ENCODE measurements at regions of chr5 and their contacts with region 1.

Region 1: DNA sequence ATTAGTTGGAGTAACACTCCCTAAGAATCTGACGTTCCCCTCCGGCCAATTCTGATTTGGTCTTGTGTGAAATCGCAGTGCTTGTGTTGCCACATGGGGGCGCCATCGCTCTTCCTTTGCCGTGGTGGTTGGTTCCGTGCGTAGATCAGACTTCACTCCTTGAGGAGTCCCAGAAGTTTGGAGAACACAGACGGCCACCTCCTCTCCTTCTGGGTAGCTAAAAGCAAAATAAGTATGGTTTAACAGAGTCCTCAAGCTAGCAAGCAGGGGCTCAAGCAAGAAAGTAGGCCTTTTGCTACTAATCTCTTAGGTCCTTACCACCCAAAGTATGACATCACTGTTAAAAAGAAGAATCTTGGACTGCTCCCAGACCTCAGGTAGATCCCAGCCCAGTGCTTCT is 59.5 kb downstream of the HSPA4 start:
- DNase-seq: peak; percentile 68 to 90
- H3K4me3 ChIP-seq: no peak overlapping the region
- H3K4me1 ChIP-seq: no peaks in the 10 kb centered on the region
- H3K27me3 ChIP-seq: no peaks in the 10 kb centered on the region

Region 2: GRCh38 chr5:133232011-133232410 is 120.7 kb after region 1 on chr5:
- in situ Hi-C with region 1: no loop called
- DNase-seq: no peak
- H3K4me3 ChIP-seq: no peak overlapping the region
- H3K4me1 ChIP-seq: no peaks in the 10 kb centered on the region
- H3K27me3 ChIP-seq: no peaks in the 10 kb centered on the region

Region 3: DNA sequence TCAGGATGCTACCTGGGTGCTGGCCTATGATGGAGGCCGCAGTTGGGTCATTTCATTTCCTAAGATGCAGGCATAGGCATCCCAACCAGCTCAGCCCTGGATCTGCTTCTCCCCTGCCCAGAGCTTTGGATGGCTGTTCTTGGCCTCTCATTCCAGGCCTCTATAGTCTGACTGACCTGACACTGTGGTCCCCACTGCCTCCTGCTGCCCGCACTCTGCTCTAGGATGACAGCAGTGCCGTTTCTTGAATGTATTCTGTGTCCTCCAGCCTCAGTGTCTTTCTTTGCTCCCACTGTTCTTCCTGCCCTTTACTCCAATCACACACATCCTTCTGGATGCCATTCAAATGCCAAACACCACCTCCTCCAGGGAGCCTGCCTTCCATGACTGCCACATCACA is 176.2 kb after region 1 on chr5:
- in situ Hi-C with region 1: loop called (anchors 5 kb)
- DNase-seq: peak in 1 of 2 experiments; percentile 69
- H3K4me3 ChIP-seq: no peak overlapping the region
- H3K4me1 ChIP-seq: no peaks in the 10 kb centered on the region
- H3K27me3 ChIP-seq: no peaks in the 10 kb centered on the region

Region 4: GRCh38 chr5:133460172-133460758 is 349.0 kb after region 1 on chr5:
- in situ Hi-C with region 1: loop called (anchors 10 kb)
- DNase-seq: peak in 1 of 2 experiments; percentile 75
- H3K4me3 ChIP-seq: no peak overlapping the region
- H3K4me1 ChIP-seq: no peaks in the 10 kb centered on the region
- H3K27me3 ChIP-seq: no peaks in the 10 kb centered on the region

Region 5: GRCh38 chr5:133868946-133869518 is 757.7 kb after region 1 on chr5:
- in situ Hi-C with region 1: loop called (anchors 25 kb)
- DNase-seq: peak; percentile 63 to 83
- H3K4me3 ChIP-seq: no peak overlapping the region
- H3K4me1 ChIP-seq: no peaks in the 10 kb centered on the region; the same call in 1 of the 2 replicates
- H3K27me3 ChIP-seq: no peaks in the 10 kb centered on the region

Region 6: DNA sequence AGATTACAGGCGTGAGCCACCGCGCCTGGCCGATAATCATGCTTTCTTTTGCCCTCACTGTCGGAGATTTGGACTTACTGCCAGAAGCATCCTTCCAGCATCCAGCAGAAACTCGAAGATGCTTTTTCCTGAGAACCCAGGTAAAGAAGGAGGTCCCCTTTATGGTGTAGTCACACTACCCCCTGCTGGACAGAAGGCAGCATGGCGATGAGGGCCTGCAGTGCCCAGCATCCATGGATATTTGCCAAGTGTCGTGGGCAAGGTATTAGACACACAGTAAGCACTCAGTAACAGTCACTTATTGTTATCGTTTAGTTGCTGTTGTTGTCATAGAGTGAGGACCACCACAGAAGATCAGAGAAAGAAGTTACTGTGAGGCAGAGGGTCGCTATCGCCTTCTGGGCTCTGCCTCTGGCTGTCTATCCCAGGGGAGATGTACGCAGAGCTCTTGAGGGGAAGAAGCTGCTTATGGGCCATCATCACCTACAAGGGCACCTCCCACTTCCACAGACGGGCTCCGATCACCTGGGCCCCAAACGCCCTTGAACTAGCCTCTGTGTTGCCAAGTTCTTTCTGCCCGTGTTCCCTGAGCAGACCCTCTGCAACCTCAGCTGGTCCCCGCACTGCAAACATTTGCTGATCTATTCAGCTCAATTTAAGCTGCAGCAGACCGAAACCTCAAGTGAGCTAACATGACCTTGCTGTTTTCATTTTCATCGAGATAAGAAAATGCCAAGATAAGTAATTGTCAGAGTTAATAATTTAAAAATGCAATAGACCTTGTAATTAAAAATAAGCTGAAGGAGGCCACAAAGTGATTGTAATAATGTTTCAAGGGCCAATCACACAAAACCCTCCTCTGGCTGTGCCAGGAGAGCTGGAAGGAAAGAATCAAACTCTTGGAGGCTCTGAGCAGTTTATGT is 833.2 kb after region 1 on chr5:
- in situ Hi-C with region 1: loop called (anchors 25 kb)
- DNase-seq: peak; percentile 30 to 73
- H3K4me3 ChIP-seq: no peak overlapping the region
- H3K4me1 ChIP-seq: no peaks in the 10 kb centered on the region
- H3K27me3 ChIP-seq: no peaks in the 10 kb centered on the region